ENCODE measurements at regions of chr1 and their contacts with region 1.

Region 1: GRCh38 chr1:35202048-35202719 is 9.2 kb upstream of the SFPQ start:
- DNase-seq: peak; percentile 39
- H3K4me3 ChIP-seq: no peak overlapping the region
- H3K27ac ChIP-seq: no peak overlapping the region
- H3K4me1 ChIP-seq: peaks cover 4% of the 10 kb centered on the region
- H3K27me3 ChIP-seq: no peaks in the 10 kb centered on the region
- CTCF ChIP-seq: peak; percentile 94

Region 2: GRCh38 chr1:35143737-35144508 is 58.3 kb before region 1 on chr1:
- intact Hi-C with region 1: no loop called
- DNase-seq: no peak
- H3K4me3 ChIP-seq: no peak overlapping the region
- H3K27ac ChIP-seq: no peak overlapping the region
- H3K4me1 ChIP-seq: no peaks in the 10 kb centered on the region
- H3K27me3 ChIP-seq: no peaks in the 10 kb centered on the region
- CTCF ChIP-seq: no peak

Region 3: GRCh38 chr1:35164893-35165292 is 37.3 kb before region 1 on chr1:
- intact Hi-C with region 1: no loop called
- DNase-seq: no peak
- H3K4me3 ChIP-seq: no peak overlapping the region
- H3K27ac ChIP-seq: no peak overlapping the region
- H3K4me1 ChIP-seq: no peaks in the 10 kb centered on the region
- H3K27me3 ChIP-seq: no peaks in the 10 kb centered on the region
- CTCF ChIP-seq: no peak

Region 4: DNA sequence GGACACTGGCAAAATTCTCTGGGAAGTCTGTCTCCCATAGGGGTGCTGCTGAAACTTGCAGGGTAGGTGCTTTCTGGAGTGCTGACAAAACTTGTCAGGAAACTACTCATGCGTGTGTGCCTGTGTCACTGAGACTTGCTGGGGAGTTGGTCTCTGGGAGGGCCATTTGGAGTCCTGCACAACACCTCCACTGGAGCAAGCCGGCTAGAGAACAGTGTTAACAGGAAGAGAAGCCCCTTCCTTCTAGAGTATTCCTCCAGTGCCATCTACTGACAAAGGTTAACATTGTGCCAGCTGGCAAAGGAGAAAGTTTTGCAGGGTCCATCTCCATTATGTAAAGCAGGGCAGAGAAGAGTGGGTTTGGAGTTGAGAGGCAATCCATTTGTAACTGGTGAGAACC is 96.3 kb after region 1 on chr1:
- intact Hi-C with region 1: loop called (anchors 5 kb)
- DNase-seq: no peak
- H3K4me3 ChIP-seq: no peak overlapping the region
- H3K27ac ChIP-seq: peak overlapping the region; percentile 28
- H3K4me1 ChIP-seq: peaks cover 46% of the 10 kb centered on the region
- H3K27me3 ChIP-seq: no peaks in the 10 kb centered on the region
- CTCF ChIP-seq: peak; percentile 52